Mammary epithelial cell (primary cell): ENCODE measurements at regions of chr6 and their contacts with region 1.

Region 1: DNA sequence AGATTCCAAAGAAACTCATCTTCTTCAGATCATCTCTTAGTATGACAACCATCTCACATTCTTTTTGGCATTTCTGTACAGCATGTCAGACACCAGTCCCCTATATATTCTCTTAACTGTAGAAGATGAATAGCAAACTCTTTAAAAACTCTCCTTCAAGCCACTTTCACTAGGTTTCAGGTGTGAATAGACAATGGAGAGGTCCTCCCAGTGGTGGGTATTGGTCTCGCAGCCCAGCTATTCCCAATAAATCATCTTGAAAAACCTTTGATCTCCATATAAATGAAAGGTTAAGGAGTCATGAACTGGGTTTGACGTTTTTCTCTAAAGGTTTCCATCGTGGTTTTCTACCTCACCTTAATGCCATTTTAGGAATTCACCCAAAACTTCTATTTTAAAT is 180.0 kb downstream of the GJA1 start:
- DNase-seq: no peak
- H3K4me3 ChIP-seq: no peak overlapping the region
- H3K27ac ChIP-seq: no peak overlapping the region
- H3K4me1 ChIP-seq: no peaks in the 10 kb centered on the region
- H3K27me3 ChIP-seq: no peaks in the 10 kb centered on the region
- CTCF ChIP-seq: peak; percentile 34 to 35

Region 2: DNA sequence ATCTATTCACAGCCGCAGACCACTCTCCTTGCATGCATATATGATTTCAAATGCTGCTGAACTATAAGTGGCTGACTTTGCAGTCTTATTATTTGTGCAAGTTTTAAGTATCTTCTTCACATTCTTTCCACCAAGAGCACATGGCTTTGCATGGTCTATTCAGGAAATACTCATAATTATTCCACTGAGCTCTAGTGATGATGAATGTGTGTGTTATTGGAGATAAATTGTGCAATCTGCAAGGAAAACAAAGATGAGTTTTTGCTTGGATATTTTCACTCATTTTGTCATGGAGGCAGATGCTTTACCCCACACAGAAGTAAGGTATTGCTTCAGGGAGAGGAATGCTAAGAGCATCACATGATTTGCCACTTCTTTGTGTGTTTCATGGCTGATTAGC is 1045.8 kb before region 1 on chr6:
- CTCF ChIA-PET with region 1: interaction called, 19 read pairs
- dilution Hi-C with region 1: no loop called
- in situ Hi-C with region 1: no loop called
- intact Hi-C with region 1: no loop called
- DNase-seq: no peak
- H3K4me3 ChIP-seq: no peak overlapping the region
- H3K27ac ChIP-seq: no peak overlapping the region
- H3K4me1 ChIP-seq: no peaks in the 10 kb centered on the region
- H3K27me3 ChIP-seq: no peaks in the 10 kb centered on the region
- CTCF ChIP-seq: no peak

Region 3: GRCh38 chr6:121680058-121680457 is 64.6 kb after region 1 on chr6:
- CTCF ChIA-PET with region 1: no interaction called
- dilution Hi-C with region 1: no loop called
- in situ Hi-C with region 1: no loop called
- intact Hi-C with region 1: no loop called
- DNase-seq: no peak
- H3K4me3 ChIP-seq: no peak overlapping the region
- H3K27ac ChIP-seq: no peak overlapping the region
- H3K4me1 ChIP-seq: no peaks in the 10 kb centered on the region
- H3K27me3 ChIP-seq: no peaks in the 10 kb centered on the region
- CTCF ChIP-seq: no peak